GM10248 (cell line): ENCODE measurements at regions of chr1 and their contacts with region 1.

Region 1: GRCh38 chr1:209827384-209828262 is at the start of gene UTP25:
- DNase-seq: peak; percentile 89
- CTCF ChIP-seq: peak; percentile 63

Region 2: GRCh38 chr1:209710093-209710492 is 117.5 kb before region 1 on chr1:
- CTCF ChIA-PET with region 1: no interaction called
- POLR2A ChIA-PET with region 1: no interaction called
- DNase-seq: no peak
- CTCF ChIP-seq: no peak

Region 3: GRCh38 chr1:209769171-209769904 is 58.3 kb before region 1 on chr1:
- CTCF ChIA-PET with region 1: interaction called, 21 read pairs
- POLR2A ChIA-PET with region 1: no interaction called
- DNase-seq: peak; percentile 74
- CTCF ChIP-seq: no peak

Region 4: DNA sequence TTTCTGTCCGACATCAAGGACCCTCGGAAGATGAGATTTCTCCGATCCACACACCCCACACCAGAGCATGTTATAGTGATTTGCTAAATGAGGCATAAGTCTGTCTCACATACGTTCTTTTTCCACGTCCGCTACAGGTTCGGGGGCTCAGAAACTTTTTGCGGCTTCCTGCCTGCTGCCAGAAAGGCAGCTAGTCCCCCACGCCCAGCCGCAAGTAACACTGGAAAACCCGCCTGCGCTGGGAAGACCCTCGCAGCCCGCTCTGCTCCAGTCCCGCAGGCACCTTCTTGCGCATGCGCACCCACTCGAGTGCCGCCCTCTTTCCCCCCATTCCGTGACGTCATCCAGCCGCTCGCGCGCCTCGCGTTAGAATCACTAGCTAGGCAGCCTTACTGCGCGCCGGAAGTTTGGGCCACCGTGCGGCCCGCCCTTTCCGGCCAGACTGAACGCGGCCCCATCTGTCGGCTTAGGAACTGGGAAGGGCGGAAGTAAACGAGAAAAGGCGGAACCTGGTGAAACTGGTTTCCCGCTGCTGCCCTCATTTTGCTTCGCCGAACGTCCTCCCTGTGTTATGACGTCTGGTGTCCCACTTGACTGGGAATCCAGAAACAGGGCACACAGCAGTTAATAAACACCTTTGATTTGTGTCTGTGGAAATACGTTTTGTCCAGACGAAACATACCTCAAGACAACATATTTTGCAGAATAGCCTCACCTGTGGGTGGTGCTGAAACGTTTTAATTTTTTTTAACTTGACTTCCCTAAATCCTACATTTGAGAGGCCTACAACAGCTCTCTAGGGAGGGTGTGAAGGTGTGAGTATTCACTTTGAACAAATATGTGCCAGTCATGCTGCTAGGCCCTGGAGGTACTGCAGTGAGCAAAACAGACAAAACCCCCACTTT is 43.1 kb before region 1 on chr1 and contains the start of gene C1orf74:
- CTCF ChIA-PET with region 1: interaction called, 13 read pairs
- POLR2A ChIA-PET with region 1: no interaction called
- DNase-seq: peak; percentile 98
- CTCF ChIP-seq: peak; percentile 9

Region 5: GRCh38 chr1:209797978-209798639 is 29.5 kb before region 1 on chr1:
- CTCF ChIA-PET with region 1: interaction called, 20 read pairs
- POLR2A ChIA-PET with region 1: no interaction called
- DNase-seq: no peak
- CTCF ChIP-seq: no peak

Region 6: GRCh38 chr1:209805875-209806760 is 21.5 kb before region 1 on chr1 and contains the start of gene IRF6:
- CTCF ChIA-PET with region 1: interaction called, 190 read pairs
- POLR2A ChIA-PET with region 1: no interaction called
- DNase-seq: peak; percentile 86
- CTCF ChIP-seq: no peak

Region 7: DNA sequence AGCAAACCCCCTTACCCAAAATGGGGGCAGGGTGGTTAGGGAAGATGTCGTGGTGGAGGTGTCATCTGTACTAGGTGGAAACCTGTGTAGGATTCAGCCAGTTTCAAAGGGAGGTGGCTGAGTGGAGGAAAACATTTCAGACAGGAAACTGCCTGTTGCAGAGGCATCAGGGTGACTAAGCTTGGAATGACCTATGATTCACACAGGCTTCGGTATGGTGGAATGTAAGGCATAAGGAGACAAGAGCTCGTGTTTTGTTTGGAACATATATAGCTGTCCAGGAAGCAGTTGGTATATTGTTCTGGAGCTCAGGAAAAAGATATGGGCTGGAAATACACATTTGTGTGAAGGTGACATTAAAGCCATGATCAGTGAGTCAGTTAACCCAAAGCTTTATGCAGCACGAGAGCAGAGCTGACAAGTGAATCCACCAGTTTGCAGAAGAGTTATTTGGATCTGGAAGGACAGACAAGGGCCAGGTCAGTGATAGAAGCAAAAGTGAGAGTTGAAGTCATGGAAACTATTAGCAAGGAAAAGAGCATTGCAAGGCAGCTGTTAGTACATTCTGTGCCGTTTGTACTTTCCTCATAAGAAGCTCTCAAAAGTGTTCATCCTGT is 12.4 kb after region 1 on chr1:
- CTCF ChIA-PET with region 1: interaction called, 89 read pairs
- POLR2A ChIA-PET with region 1: no interaction called
- DNase-seq: no peak
- CTCF ChIP-seq: no peak

Region 8: GRCh38 chr1:209850342-209850979 is 22.8 kb after region 1 on chr1:
- CTCF ChIA-PET with region 1: interaction called, 89 read pairs
- POLR2A ChIA-PET with region 1: no interaction called
- DNase-seq: peak; percentile 55
- CTCF ChIP-seq: peak; percentile 62

Region 9: GRCh38 chr1:209895709-209896108 is 68.1 kb after region 1 on chr1:
- CTCF ChIA-PET with region 1: no interaction called
- POLR2A ChIA-PET with region 1: no interaction called
- DNase-seq: no peak
- CTCF ChIP-seq: no peak

Region 10: GRCh38 chr1:210021145-210021860 is 193.7 kb after region 1 on chr1:
- CTCF ChIA-PET with region 1: no interaction called
- POLR2A ChIA-PET with region 1: no interaction called
- DNase-seq: no peak
- CTCF ChIP-seq: no peak